ENCODE measurements at regions of chr22 and their contacts with region 1.

Region 1: GRCh38 chr22:23692598-23693291 is 1.9 kb downstream of the RGL4 start:
- DNase-seq: peak in 1 of 2 donors; percentile 24
- H3K4me3 ChIP-seq: no peak overlapping the region
- H3K27ac ChIP-seq: no peak overlapping the region
- H3K4me1 ChIP-seq: no peaks in the 10 kb centered on the region
- H3K27me3 ChIP-seq: no peaks in the 10 kb centered on the region
- CTCF ChIP-seq: no peak
- POLR2A ChIP-seq: no peak

Region 2: DNA sequence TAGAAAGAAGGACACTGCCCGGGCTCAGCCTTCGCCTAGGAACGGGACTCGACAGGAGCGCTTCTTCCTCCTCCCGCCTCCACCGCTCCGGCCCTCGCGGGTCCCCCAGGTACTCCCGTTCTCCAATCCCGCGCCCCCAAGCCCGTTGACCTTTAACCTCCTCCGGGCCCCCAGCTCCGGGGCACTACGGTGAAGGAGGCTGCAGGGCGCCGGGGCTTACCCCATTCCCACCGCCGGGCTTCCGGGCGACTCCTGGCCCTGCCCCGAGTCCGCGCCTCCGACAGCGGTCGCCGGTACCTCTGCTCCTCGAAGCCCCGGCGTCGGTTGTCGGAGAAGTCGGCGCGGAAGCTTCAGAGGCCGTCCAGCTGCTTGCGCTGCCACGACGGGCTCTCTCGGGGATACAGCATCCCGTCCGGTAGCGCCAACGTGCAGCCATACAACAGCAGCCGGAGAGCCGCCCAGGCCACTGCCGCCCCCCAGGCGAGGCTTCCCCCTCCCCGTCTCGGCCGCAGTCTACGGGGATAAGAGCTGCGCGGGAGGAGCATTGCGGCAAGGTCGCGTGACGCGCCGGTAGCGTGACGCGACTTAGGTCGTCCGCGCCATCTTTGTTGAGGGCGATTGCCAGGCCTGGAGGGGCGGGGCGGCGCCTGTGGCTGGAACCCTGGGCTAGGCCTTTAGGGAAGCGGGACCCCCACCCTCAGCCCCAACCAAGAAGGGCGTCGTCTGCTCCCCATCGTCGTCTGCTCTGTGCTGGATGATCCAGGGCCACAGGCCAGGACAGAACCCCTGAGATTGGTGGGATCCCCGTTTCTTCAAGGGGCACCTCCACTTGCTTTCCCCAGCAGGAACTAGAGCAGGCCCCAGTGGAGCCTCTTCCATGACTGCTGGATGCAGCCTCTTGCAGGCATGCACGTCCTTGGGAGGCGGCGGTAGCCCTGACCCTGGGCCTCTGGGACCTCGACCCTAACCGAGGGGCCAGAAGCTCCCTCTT is 24.4 kb after region 1 on chr22:
- intact Hi-C with region 1: no loop called
- DNase-seq: peak; percentile 63
- H3K4me3 ChIP-seq: peak overlapping the region; percentile 69 to 89 (median 85)
- H3K27ac ChIP-seq: peak overlapping the region; percentile 64 to 81
- H3K4me1 ChIP-seq: no peaks in the 10 kb centered on the region
- H3K27me3 ChIP-seq: no peaks in the 10 kb centered on the region
- CTCF ChIP-seq: no peak
- POLR2A ChIP-seq: peak; percentile 19

Region 3: GRCh38 chr22:24219750-24220149 is 527.0 kb after region 1 on chr22:
- intact Hi-C with region 1: loop called (anchors 5 kb)
- DNase-seq: no peak
- H3K4me3 ChIP-seq: no peak overlapping the region
- H3K27ac ChIP-seq: no peak overlapping the region
- H3K4me1 ChIP-seq: no peaks in the 10 kb centered on the region
- H3K27me3 ChIP-seq: no peaks in the 10 kb centered on the region
- CTCF ChIP-seq: no peak
- POLR2A ChIP-seq: no peak

Measured in breast epithelium (tissue), 4 donors.